Vagina (tissue), 2 donors: ENCODE measurements at regions of chr11 and their contacts with region 1.

Region 1: GRCh38 chr11:14892036-14892567 is at the start of gene CYP2R1:
- DNase-seq: peak; percentile 96 to 97
- H3K4me3 ChIP-seq: peak within 1 kb of the TSS; percentile 76 to 80
- H3K27ac ChIP-seq: peak within 1 kb of the TSS; percentile 93
- H3K4me1 ChIP-seq: peaks cover 26% of the 10 kb centered on the region
- H3K27me3 ChIP-seq: no peaks in the 10 kb centered on the region
- CTCF ChIP-seq: no peak
- POLR2A ChIP-seq: peak in 1 of 2 donors; percentile 9
- total RNA-seq, gene CYP2R1: 12.3 TPM

Region 2: GRCh38 chr11:14435717-14436512 is 456.2 kb before region 1 on chr11:
- intact Hi-C with region 1: no loop called
- DNase-seq: no peak
- H3K4me3 ChIP-seq: no peak overlapping the region
- H3K27ac ChIP-seq: no peak overlapping the region
- H3K4me1 ChIP-seq: no peaks in the 10 kb centered on the region
- H3K27me3 ChIP-seq: no peaks in the 10 kb centered on the region
- CTCF ChIP-seq: no peak
- POLR2A ChIP-seq: no peak

Region 3: GRCh38 chr11:14519917-14520746 is 372.0 kb before region 1 on chr11 and contains the start of gene PSMA1:
- intact Hi-C with region 1: loop called (anchors 10 kb)
- DNase-seq: peak in 1 of 2 donors; percentile 95
- H3K4me3 ChIP-seq: peak within 1 kb of the TSS; percentile 65 to 80
- H3K27ac ChIP-seq: peak within 1 kb of the TSS; percentile 78
- H3K4me1 ChIP-seq: peaks cover 17% of the 10 kb centered on the region
- H3K27me3 ChIP-seq: no peaks in the 10 kb centered on the region
- CTCF ChIP-seq: peak in 2 of 3 experiments; percentile 32 to 73
- POLR2A ChIP-seq: peak in 1 of 2 donors; percentile 53
- total RNA-seq, gene PSMA1: 72.4 TPM

Region 4: DNA sequence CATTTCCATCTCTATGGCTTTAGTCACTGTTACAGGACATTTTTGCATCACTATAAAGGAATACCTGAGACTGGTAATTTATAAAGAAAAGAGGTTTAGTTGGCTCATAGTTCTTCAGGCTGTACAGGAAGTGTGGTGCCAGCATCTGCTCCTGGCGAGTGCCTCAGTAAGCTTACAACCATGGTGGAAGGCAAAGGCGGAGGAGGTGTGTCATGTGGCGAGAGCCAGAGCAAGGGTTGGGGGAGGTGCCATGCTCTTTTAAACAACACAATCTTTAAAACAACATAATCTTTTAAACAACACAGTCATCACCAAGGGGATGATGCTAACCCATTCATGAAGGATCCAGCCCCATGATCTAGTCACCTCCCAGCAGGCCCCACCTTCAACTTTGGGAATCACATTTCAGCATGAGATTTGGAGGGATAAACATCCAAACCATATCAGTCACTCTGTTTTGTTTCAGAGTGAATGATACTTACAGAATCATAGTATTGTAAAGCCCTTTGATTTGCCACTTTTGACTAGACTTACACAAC is 145.2 kb before region 1 on chr11:
- intact Hi-C with region 1: no loop called
- DNase-seq: no peak
- H3K4me3 ChIP-seq: no peak overlapping the region
- H3K27ac ChIP-seq: no peak overlapping the region
- H3K4me1 ChIP-seq: no peaks in the 10 kb centered on the region
- H3K27me3 ChIP-seq: no peaks in the 10 kb centered on the region
- CTCF ChIP-seq: no peak
- POLR2A ChIP-seq: no peak